ENCODE measurements at regions of chrX and their contacts with region 1.

Region 1: GRCh38 chrX:53714580-53715345 is 28.2 kb upstream of the HUWE1 start:
- DNase-seq: peak; percentile 75
- H3K4me3 Mint-ChIP-seq: peak overlapping the region; percentile 85
- H3K27ac Mint-ChIP-seq: peak overlapping the region; percentile 100
- H3K4me1 Mint-ChIP-seq: peaks cover 60% of the 10 kb centered on the region
- H3K27me3 Mint-ChIP-seq: no peaks in the 10 kb centered on the region

Region 2: DNA sequence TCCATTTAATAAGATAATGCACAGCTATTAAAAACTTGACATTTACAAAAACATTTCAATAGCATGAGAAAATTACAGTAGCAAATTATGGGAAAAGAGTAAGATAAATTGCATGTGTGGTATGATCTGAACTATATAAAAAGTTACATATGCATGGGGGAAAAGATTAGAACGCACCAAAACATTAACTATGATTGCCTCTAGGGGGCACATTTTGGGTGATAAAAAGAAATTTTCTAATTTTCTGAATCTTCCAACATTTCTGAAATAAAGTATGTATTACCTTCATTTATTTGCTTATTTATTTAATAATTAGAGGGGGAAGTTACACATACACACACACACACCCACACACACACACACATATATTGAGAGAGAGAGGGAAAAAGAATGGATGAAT is 470.2 kb before region 1 on chrX:
- CTCF ChIA-PET with region 1: no interaction called
- POLR2A ChIA-PET with region 1: no interaction called
- DNase-seq: no peak
- H3K4me3 Mint-ChIP-seq: no peak overlapping the region
- H3K27ac Mint-ChIP-seq: no peak overlapping the region
- H3K4me1 Mint-ChIP-seq: no peaks in the 10 kb centered on the region
- H3K27me3 Mint-ChIP-seq: no peaks in the 10 kb centered on the region

Region 3: GRCh38 chrX:53694642-53695041 is 20.1 kb before region 1 on chrX:
- CTCF ChIA-PET with region 1: no interaction called
- POLR2A ChIA-PET with region 1: interaction called, 13 read pairs
- DNase-seq: no peak
- H3K4me3 Mint-ChIP-seq: no peak overlapping the region
- H3K27ac Mint-ChIP-seq: no peak overlapping the region
- H3K4me1 Mint-ChIP-seq: peaks cover 26% of the 10 kb centered on the region
- H3K27me3 Mint-ChIP-seq: no peaks in the 10 kb centered on the region

Region 4: GRCh38 chrX:53732797-53733196 is 18.0 kb after region 1 on chrX:
- CTCF ChIA-PET with region 1: interaction called, 6 read pairs
- POLR2A ChIA-PET with region 1: interaction called, 79 read pairs
- DNase-seq: no peak
- H3K4me3 Mint-ChIP-seq: peak overlapping the region; percentile 57
- H3K27ac Mint-ChIP-seq: peak overlapping the region; percentile 90
- H3K4me1 Mint-ChIP-seq: peaks cover 62% of the 10 kb centered on the region
- H3K27me3 Mint-ChIP-seq: no peaks in the 10 kb centered on the region

Measured in activated CD4-positive, alpha-beta memory T cell treated with anti-CD3 and anti-CD28 coated beads, Interleukin-2, amount 10 ng/mL, durations not matched to agents 7 days and 5 days (primary cell).